IMR-90 (cell line): ENCODE measurements at regions of chr2 and their contacts with region 1.

Region 1: GRCh38 chr2:197229509-197230443 is 80.8 kb downstream of the ANKRD44 start:
- DNase-seq: peak; percentile 88
- ATAC-seq: peak; percentile 82
- H3K4me3 ChIP-seq: no peak overlapping the region
- H3K27ac ChIP-seq: no peak overlapping the region
- H3K4me1 ChIP-seq: peaks cover 3% of the 10 kb centered on the region
- H3K27me3 ChIP-seq: no peaks in the 10 kb centered on the region
- CTCF ChIP-seq: no peak
- POLR2A ChIP-seq: no peak
- RAD21 ChIP-seq: no peak

Region 2: DNA sequence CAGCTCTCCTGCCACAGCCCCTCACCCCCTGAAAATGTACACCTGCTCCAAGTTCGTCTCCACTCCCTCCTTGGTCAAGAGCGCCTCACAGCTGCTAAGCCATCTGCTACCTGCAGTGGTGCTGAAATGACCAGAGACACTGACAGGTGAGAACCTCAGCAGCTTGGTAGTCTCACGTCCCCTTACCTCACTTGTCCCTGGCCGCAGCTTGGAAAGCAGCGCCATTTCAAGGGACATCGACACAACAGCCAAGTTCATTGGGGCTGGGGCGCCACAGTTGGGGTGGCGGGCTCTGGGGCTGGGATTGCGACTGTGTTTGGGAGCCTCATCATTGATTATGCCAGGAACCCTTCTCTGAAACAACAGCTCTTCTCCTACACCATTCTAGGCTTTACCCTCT is 33.3 kb after region 1 on chr2:
- CTCF ChIA-PET with region 1: no interaction called
- POLR2A ChIA-PET with region 1: no interaction called
- dilution Hi-C with region 1: no loop called
- in situ Hi-C with region 1: no loop called
- intact Hi-C with region 1: loop called (anchors 1 kb)
- DNase-seq: no peak
- ATAC-seq: no peak
- H3K4me3 ChIP-seq: no peak overlapping the region
- H3K27ac ChIP-seq: no peak overlapping the region
- H3K4me1 ChIP-seq: peaks cover 10% of the 10 kb centered on the region
- H3K27me3 ChIP-seq: no peaks in the 10 kb centered on the region
- CTCF ChIP-seq: no peak
- POLR2A ChIP-seq: no peak
- RAD21 ChIP-seq: no peak

Region 3: DNA sequence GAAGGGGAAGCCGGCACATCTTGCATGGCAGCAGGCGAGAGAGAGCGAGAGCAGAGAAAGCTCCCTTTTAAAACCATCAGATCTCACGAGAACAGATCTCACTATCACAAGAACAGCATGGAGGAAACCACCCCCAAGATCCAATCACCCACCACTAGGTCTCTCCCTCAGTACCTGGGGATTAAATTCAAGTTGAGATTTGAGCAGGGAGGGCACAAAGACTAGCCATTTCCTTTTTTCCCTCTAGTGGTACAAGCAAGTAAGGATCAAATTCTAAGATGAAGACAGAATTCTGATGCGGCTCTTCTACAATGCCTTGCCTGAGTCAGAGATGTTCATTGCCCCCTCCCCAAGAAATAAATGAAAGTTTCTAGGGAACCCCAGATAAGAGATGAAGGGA is 126.4 kb after region 1 on chr2:
- CTCF ChIA-PET with region 1: no interaction called
- POLR2A ChIA-PET with region 1: no interaction called
- dilution Hi-C with region 1: no loop called
- in situ Hi-C with region 1: no loop called
- intact Hi-C with region 1: no loop called
- DNase-seq: no peak
- ATAC-seq: peak; percentile 27; the same call in 1 of the 2 replicates
- H3K4me3 ChIP-seq: no peak overlapping the region
- H3K27ac ChIP-seq: no peak overlapping the region
- H3K4me1 ChIP-seq: no peaks in the 10 kb centered on the region
- H3K27me3 ChIP-seq: no peaks in the 10 kb centered on the region
- CTCF ChIP-seq: peak; percentile 29
- POLR2A ChIP-seq: no peak
- RAD21 ChIP-seq: peak; percentile 36

Region 4: DNA sequence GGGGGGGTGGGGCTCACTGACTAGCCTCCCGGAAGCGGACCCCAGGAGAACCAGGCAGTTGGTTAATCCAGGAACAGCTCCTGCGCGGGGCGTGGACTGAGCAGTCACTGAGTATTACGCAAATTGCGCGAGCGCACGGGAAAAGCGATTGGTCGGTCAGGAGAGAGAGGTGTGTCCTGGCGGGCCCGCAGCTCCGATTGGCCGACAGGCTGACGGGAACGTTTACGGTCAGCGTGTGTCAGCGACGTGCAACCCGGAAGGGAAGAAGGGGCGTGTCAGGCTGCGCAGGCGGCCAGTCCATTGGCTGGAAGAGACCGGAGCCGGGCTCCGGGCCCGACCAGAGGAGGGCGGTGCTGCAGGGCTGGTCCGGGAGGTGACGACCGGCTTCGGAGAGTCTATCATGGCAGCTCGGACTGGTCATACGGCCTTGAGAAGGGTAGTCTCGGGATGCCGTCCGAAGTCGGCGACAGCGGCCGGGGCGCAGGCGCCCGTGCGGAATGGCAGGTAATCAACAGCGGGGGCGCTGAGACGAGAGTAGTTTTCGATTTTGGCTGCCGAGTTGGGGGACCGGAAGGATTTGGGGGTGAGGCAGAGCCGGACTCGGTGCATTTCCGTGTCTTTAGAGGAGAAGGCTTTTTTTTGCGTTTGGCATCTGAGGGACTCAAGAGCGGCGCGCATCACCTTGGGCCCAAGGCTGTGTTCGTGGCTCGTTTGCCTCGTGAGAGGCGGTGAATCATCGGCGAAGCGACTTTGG is 223.6 kb after region 1 on chr2 and contains the start of gene COQ10B:
- CTCF ChIA-PET with region 1: no interaction called
- POLR2A ChIA-PET with region 1: no interaction called
- dilution Hi-C with region 1: no loop called
- in situ Hi-C with region 1: no loop called
- intact Hi-C with region 1: no loop called
- DNase-seq: peak; percentile 100
- ATAC-seq: peak; percentile 96
- H3K4me3 ChIP-seq: peak within 1 kb of the TSS; percentile 70
- H3K27ac ChIP-seq: peak within 1 kb of the TSS; percentile 92
- H3K4me1 ChIP-seq: no peaks in the 10 kb centered on the region
- H3K27me3 ChIP-seq: no peaks in the 10 kb centered on the region
- CTCF ChIP-seq: peak; percentile 37
- POLR2A ChIP-seq: peak; percentile 98
- RAD21 ChIP-seq: no peak
- total RNA-seq, gene COQ10B: 28.7 and 64.2 TPM in 2 replicates

Region 5: GRCh38 chr2:197547163-197547900 is 317.6 kb after region 1 on chr2:
- CTCF ChIA-PET with region 1: no interaction called
- POLR2A ChIA-PET with region 1: no interaction called
- dilution Hi-C with region 1: no loop called
- in situ Hi-C with region 1: no loop called
- intact Hi-C with region 1: no loop called
- DNase-seq: no peak
- ATAC-seq: no peak
- H3K4me3 ChIP-seq: no peak overlapping the region
- H3K27ac ChIP-seq: no peak overlapping the region
- H3K4me1 ChIP-seq: no peaks in the 10 kb centered on the region
- H3K27me3 ChIP-seq: no peaks in the 10 kb centered on the region
- CTCF ChIP-seq: no peak
- POLR2A ChIP-seq: no peak
- RAD21 ChIP-seq: no peak